H1 (cell line): ENCODE measurements at regions of chr17 and their contacts with region 1.

Region 1: DNA sequence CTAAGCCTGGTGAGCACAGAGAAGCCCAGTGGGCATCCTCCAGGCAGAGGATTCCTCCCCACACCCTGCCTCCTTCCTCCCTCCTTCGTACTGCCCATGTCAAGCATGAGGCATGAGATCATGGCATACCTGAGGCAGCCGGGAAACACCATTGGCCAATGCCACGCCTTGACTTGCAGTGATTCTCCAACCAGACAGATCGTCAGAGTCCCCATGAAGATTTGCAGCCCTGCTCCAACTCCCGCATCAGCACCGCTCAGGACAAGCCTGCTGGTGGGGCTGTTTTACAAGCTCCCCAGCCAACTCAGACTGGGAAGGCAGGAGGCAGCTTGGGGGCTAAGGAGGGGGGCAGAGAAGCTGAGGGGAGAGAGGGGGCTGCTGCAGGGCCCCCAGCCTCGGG is 2.9 kb upstream of the KRT16 start:
- DNase-seq: peak in 1 of 2 experiments; percentile 31
- H3K4me3 ChIP-seq: no peak overlapping the region
- H3K27ac ChIP-seq: no peak overlapping the region
- H3K4me1 ChIP-seq: peaks cover 0 to 4% (median 2%) of the 10 kb centered on the region in 4 experiments; a peak in 4 of 7 replicates
- H3K27me3 ChIP-seq: no peaks in the 10 kb centered on the region
- CTCF ChIP-seq: peak in 1 of 3 experiments; percentile 14; a peak in 2 of 4 replicates
- EP300 ChIP-seq: no peak
- POLR2A ChIP-seq: no peak
- RAD21 ChIP-seq: peak; percentile 13 to 29; a peak in 3 of 4 replicates

Region 2: DNA sequence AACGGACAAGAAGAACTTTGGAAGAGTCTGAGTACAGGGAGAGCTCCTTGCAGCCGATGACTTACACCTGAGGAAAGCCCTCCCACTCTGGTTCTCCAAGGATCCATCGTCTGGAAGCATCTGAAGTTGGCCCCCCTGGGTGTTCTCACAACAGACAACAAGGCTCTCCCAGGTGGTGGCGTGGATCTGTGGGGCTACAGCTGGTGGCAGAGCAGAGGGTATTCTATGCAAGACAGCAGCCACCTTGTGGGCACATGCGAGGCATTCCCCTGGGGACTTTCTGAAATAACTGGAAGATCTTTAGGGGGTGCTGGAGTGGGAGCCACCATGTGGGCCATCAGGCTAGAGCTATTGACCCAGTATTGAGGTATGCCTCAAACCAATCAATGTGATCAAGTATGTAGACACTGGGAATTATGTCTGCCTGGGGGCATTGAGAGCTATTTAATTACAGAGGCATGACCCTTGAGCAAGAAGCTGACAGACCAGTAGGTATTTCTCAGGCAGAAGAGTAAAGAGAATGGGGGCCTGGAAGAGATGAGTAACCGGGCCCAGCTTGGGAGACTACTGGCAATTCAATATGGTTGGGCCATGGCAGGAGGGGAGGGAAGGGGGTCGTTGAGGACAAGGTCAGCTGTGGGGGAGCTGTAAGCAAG is 80.4 kb before region 1 on chr17:
- CTCF ChIA-PET with region 1: no interaction called
- POLR2A ChIA-PET with region 1: no interaction called
- DNase-seq: no peak
- H3K4me3 ChIP-seq: no peak overlapping the region
- H3K27ac ChIP-seq: no peak overlapping the region
- H3K4me1 ChIP-seq: peaks cover 10 to 19% (median 13%) of the 10 kb centered on the region in 4 experiments
- H3K27me3 ChIP-seq: no peaks in the 10 kb centered on the region; a peak in 1 of 7 replicates
- CTCF ChIP-seq: peak in 2 of 3 experiments; percentile 3 to 7; a peak in 1 of 4 replicates
- EP300 ChIP-seq: no peak
- POLR2A ChIP-seq: no peak
- RAD21 ChIP-seq: no peak

Region 3: DNA sequence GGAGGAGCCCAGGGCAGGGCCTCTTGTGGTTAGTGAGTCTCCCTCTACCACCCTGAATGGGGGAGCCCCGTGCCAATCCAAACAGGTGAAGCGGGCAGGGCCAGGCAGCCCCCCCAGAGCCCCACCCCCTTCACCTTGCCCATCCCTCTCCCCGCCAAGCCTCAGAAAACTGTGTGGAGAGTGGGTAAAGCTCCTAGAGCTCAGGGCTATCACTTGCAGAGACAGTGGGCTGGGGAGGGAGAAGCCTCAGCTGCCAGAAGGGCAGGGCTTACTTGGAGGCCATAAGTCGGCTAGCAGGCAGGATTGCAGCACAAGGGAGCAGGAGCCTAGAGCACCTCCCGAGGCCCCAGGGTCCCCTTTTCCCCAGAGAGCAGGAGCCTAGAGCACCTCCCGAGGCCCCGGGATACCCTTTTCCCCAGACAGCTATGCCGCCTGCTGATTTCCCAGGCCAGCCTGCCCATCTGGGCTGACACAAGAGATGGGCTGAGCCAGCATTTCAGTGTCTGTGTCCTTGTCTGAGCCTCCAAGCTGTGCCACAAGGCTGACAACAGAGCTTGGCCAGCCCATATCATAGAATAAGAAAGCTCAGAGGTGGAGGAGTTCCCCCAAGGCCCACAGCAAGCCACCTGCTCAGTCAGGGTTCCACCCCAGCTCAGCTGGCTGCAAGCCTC is 22.0 kb before region 1 on chr17:
- CTCF ChIA-PET with region 1: interaction called, 17 read pairs
- POLR2A ChIA-PET with region 1: no interaction called
- DNase-seq: no peak
- H3K4me3 ChIP-seq: no peak overlapping the region
- H3K27ac ChIP-seq: no peak overlapping the region
- H3K4me1 ChIP-seq: no peaks in the 10 kb centered on the region; a peak in 1 of 7 replicates
- H3K27me3 ChIP-seq: no peaks in the 10 kb centered on the region
- CTCF ChIP-seq: no peak
- EP300 ChIP-seq: no peak
- POLR2A ChIP-seq: no peak
- RAD21 ChIP-seq: no peak

Region 4: GRCh38 chr17:41602524-41602923 is 12.9 kb before region 1 on chr17:
- CTCF ChIA-PET with region 1: interaction called, 11 read pairs
- POLR2A ChIA-PET with region 1: no interaction called
- DNase-seq: no peak
- H3K4me3 ChIP-seq: no peak overlapping the region
- H3K27ac ChIP-seq: no peak overlapping the region
- H3K4me1 ChIP-seq: no peaks in the 10 kb centered on the region
- H3K27me3 ChIP-seq: no peaks in the 10 kb centered on the region
- CTCF ChIP-seq: no peak
- EP300 ChIP-seq: no peak
- POLR2A ChIP-seq: no peak
- RAD21 ChIP-seq: no peak

Region 5: DNA sequence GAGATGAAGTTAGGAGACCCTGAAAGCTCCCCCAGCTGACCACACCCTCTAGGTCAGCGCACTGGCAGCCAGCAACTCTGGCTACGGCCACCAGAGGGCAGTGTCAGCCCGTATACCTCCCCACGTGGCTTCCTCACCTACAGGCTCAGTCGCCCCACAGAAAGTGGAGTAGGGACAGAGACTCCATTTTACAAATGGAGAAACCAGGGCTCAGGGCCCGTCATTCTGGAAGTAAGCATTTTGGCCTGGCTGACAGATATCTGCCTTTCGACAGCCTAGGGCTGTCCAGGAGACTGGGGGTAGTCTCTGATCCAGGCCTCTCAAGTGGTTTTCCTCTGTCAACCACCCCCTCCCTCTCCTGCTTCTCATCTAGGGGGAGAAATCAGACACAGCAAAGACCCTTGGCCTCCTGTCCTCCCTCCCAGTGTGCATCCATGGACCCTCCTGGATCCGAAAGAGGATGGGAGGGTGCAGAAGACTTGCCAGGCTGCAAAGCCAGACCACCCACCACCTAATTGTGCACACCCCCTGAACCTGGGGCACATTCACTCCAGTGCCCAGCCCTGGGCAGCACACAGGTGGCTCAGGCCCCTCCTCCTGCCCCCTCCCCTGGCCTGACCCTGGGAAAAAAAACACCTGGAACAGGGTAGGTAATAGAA is 122.8 kb after region 1 on chr17:
- CTCF ChIA-PET with region 1: no interaction called
- POLR2A ChIA-PET with region 1: no interaction called
- DNase-seq: peak; percentile 69 to 95
- H3K4me3 ChIP-seq: no peak overlapping the region
- H3K27ac ChIP-seq: peak overlapping the region; percentile 79
- H3K4me1 ChIP-seq: peaks cover 0 to 11% (median 8%) of the 10 kb centered on the region in 4 experiments; a peak in 6 of 7 replicates
- H3K27me3 ChIP-seq: peaks cover 13 to 45% (median 33%) of the 10 kb centered on the region in 4 experiments
- CTCF ChIP-seq: peak; percentile 97 to 99 (median 98)
- EP300 ChIP-seq: 0 out of 3 replicates have a peak, but pooled peaks of 1 of the 2 experiments have one; percentile 34
- POLR2A ChIP-seq: 0 out of 3 replicates have a peak, but pooled peaks of 1 of the 2 experiments have one; percentile 19
- RAD21 ChIP-seq: peak; percentile 99 to 100